Activated CD8-positive, alpha-beta T cell treated with anti-CD3 and anti-CD28 coated beads, Interleukin-2, amount 10 ng/mL, durations not matched to agents 7 days and 5 days (primary cell): ENCODE measurements at regions of chr6 and their contacts with region 1.

Region 1: DNA sequence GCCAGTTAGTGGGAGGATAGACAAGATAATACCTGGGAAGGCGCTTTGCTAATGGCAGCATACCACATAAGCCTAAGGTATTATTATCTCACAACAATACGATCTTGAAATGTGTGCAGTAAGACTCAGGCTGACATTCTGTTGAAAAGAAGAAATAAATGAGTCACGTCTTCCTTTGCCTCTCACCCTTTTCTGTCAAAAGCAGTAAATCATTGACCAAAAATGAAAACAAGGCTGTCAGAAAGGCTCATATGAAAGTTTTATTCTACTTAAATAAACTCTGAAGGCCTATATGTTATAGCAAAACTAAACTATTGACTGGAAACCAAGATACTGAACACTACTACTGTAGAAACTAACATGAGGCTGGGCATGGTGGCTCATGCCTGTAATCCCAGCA is 43.1 kb upstream of the IL20RA start:
- DNase-seq: no peak
- ATAC-seq: no peak
- H3K4me3 Mint-ChIP-seq: no peak overlapping the region
- H3K27ac Mint-ChIP-seq: no peak overlapping the region
- H3K4me1 Mint-ChIP-seq: no peaks in the 10 kb centered on the region
- H3K27me3 Mint-ChIP-seq: peaks cover 18% of the 10 kb centered on the region

Region 2: GRCh38 chr6:137076277-137077068 is 11.4 kb before region 1 on chr6:
- CTCF ChIA-PET with region 1: interaction called, 24 read pairs
- POLR2A ChIA-PET with region 1: no interaction called
- DNase-seq: peak; percentile 70
- ATAC-seq: peak; percentile 92
- H3K4me3 Mint-ChIP-seq: no peak overlapping the region
- H3K27ac Mint-ChIP-seq: no peak overlapping the region
- H3K4me1 Mint-ChIP-seq: no peaks in the 10 kb centered on the region
- H3K27me3 Mint-ChIP-seq: peaks cover 44% of the 10 kb centered on the region

Region 3: GRCh38 chr6:137102851-137103492 is 15.1 kb after region 1 on chr6:
- CTCF ChIA-PET with region 1: no interaction called
- POLR2A ChIA-PET with region 1: no interaction called
- DNase-seq: peak; percentile 62
- ATAC-seq: peak; percentile 91
- H3K4me3 Mint-ChIP-seq: no peak overlapping the region
- H3K27ac Mint-ChIP-seq: peak overlapping the region; percentile 6
- H3K4me1 Mint-ChIP-seq: peaks cover 48% of the 10 kb centered on the region
- H3K27me3 Mint-ChIP-seq: peaks cover 2% of the 10 kb centered on the region